ENCODE measurements at regions of chr2 and their contacts with region 1.

Region 1: DNA sequence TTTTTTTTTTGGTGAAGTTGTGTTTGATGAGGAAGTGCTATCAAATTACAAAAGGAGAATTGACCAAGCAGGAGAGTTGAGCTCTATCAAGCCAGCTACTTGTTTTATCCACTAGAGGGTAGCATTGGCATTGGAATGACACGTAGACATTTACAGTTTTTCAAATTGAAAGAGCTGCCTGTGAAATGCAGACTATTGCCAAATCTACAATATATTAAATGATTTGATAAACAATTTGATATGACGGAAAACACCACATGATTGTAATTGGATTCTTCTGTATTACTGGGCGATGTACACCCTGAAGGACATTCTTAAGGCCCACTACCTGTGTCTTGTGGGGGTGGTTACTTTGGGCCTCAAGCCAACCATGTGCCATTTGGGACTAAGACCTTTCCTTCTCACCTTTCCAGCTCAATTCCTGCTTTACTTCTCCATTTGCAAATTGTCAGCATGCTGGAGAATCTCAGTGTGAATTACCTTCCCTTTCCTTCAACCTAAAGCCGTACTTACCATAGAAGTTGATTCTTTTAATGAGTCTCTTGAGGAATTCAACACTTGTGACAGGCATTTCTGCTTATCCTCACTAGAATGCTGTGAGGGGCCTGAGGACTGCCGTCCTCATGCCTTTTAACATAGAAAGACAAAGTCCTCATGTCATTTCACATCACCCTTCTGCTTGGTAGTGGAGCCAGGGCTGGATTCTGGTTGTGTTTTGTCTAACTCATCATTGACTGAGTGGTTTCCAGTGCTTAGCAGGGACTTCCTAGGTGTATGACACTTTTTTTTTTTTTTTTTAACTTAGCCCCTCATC is 134.8 kb upstream of the THUMPD2 start:
- ATAC-seq: peak; percentile 55 to 85 (median 66)
- H3K4me3 ChIP-seq: no peak overlapping the region
- H3K27ac ChIP-seq: no peak overlapping the region
- H3K4me1 ChIP-seq: no peaks in the 10 kb centered on the region

Region 2: DNA sequence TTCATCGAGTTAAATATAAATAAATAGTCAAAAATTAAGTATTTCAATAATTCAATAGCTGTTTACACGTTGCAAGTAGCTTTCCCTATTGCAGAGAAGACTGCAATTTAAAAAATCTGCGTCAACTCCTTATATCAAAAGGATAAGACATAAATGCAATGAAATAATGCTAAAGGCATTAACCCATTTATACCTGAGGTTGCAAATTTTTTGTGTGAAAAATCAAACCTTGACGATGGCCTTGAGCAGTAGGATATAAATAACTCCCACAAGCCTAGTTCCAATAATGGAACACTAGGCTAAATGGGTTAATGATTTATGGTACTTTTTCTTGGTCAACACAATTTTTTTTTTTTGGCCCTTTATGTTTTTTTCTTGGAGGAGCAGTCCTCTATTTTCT is 593.7 kb before region 1 on chr2:
- in situ Hi-C with region 1: no loop called
- ATAC-seq: no peak
- H3K4me3 ChIP-seq: no peak overlapping the region
- H3K27ac ChIP-seq: no peak overlapping the region
- H3K4me1 ChIP-seq: no peaks in the 10 kb centered on the region

Region 3: GRCh38 chr2:40244675-40245074 is 330.8 kb after region 1 on chr2:
- in situ Hi-C with region 1: loop called in 1 of 9 experiments (anchors 25 kb)
- ATAC-seq: peak; percentile 43 to 83 (median 61)
- H3K4me3 ChIP-seq: no peak overlapping the region
- H3K27ac ChIP-seq: no peak overlapping the region
- H3K4me1 ChIP-seq: peaks cover 22 to 25% of the 10 kb centered on the region in 2 donors

Region 4: DNA sequence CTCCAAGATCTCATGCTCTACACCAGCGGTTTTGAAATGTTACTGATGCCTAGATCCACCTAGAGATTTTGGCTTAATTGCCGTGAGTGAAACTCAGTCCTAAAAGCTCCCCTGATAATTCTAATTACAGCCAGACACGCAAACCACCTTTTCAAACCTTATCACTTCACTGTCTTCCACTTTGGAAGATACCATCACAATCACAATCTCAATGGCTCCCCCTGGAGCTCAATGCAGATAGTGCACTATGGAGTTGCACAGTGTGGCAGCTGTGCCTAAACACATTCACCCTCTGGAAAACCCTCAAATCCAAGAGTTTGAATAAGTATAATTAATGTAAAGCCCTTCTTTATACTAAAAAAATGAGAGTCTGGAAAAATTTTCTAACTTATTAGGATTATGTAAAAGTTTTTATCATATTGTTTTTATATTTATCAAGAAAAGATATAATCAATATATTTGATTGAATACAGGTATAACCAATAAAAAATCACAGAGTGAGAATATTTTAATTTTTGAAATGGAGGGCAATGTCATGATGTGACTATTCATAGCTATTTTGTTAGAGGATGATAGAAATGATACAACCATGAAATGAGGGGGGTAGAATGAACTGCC is 640.9 kb after region 1 on chr2:
- in situ Hi-C with region 1: loop called in 1 of 9 experiments (anchors 25 kb)
- ATAC-seq: peak in 4 of 8 experiments; percentile 54 to 83 (median 70)
- H3K4me3 ChIP-seq: no peak overlapping the region
- H3K27ac ChIP-seq: no peak overlapping the region
- H3K4me1 ChIP-seq: peaks cover 0 to 5% of the 10 kb centered on the region in 2 donors

Region 5: GRCh38 chr2:41782306-41783158 is 1868.7 kb after region 1 on chr2:
- in situ Hi-C with region 1: loop called in 7 of 9 experiments (anchors 25 kb)
- ATAC-seq: peak in 2 of 8 experiments; percentile 30 to 40
- H3K4me3 ChIP-seq: no peak overlapping the region
- H3K27ac ChIP-seq: no peak overlapping the region
- H3K4me1 ChIP-seq: no peaks in the 10 kb centered on the region

Measured in motor neuron (in vitro differentiated cells).